ENCODE measurements at regions of chr3 and their contacts with region 1.

Region 1: DNA sequence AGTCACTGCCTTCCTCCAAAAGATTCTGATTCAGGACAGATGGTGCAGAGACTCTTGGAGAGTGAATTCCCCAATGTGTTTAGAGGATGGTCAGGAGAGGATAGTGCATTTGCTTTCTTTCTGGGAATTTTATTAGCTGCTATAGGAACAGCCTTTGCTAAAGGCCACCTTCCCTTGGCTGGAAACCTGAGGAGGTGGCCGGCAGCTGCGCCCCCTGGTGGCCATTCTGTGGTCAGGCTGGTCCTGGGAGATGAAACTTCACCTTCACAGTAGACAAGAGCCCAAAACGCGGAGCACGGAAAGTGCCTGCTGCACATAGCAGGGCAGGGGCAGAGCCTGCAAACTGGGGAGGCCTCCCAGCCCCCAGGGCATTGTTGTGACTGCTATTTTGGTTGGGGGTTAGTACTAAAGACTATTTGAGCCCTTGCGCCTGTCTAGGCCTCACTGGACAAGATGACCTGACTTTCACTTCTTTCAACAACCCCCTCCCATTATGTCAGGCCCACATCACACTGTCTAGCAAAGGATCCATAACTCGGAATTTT is 34.3 kb downstream of the SEC22C start:
- DNase-seq: peak; percentile 76
- H3K4me3 Mint-ChIP-seq: no peak overlapping the region
- H3K27ac Mint-ChIP-seq: no peak overlapping the region
- H3K4me1 Mint-ChIP-seq: no peaks in the 10 kb centered on the region
- H3K27me3 Mint-ChIP-seq: no peaks in the 10 kb centered on the region
- CTCF ChIP-seq: peak; percentile 80

Region 2: GRCh38 chr3:42229942-42230688 is 317.4 kb before region 1 on chr3:
- CTCF ChIA-PET with region 1: interaction called, 8 read pairs
- intact Hi-C with region 1: loop called (anchors 2 kb)
- DNase-seq: peak; percentile 49
- H3K4me3 Mint-ChIP-seq: no peak overlapping the region
- H3K27ac Mint-ChIP-seq: no peak overlapping the region
- H3K4me1 Mint-ChIP-seq: no peaks in the 10 kb centered on the region
- H3K27me3 Mint-ChIP-seq: peaks cover 27% of the 10 kb centered on the region
- CTCF ChIP-seq: no peak

Region 3: GRCh38 chr3:42451546-42452230 is 95.8 kb before region 1 on chr3:
- CTCF ChIA-PET with region 1: no interaction called
- intact Hi-C with region 1: loop called (anchors 10 kb)
- DNase-seq: peak; percentile 35
- H3K4me3 Mint-ChIP-seq: no peak overlapping the region
- H3K27ac Mint-ChIP-seq: no peak overlapping the region
- H3K4me1 Mint-ChIP-seq: no peaks in the 10 kb centered on the region
- H3K27me3 Mint-ChIP-seq: no peaks in the 10 kb centered on the region
- CTCF ChIP-seq: no peak

Measured in Calu3 (cell line).